Posterior vena cava (tissue), 2 donors: ENCODE measurements at regions of chr16 and their contacts with region 1.

Region 1: GRCh38 chr16:84754353-84754856 is 54.6 kb downstream of the USP10 start:
- DNase-seq: no peak

Region 2: GRCh38 chr16:84952335-84953189 is 198.2 kb after region 1 on chr16:
- intact Hi-C with region 1: loop called (anchors 5 kb)
- DNase-seq: peak; percentile 88

Region 3: GRCh38 chr16:84959045-84959576 is 204.7 kb after region 1 on chr16:
- intact Hi-C with region 1: loop called (anchors 5 kb)
- DNase-seq: no peak

Region 4: DNA sequence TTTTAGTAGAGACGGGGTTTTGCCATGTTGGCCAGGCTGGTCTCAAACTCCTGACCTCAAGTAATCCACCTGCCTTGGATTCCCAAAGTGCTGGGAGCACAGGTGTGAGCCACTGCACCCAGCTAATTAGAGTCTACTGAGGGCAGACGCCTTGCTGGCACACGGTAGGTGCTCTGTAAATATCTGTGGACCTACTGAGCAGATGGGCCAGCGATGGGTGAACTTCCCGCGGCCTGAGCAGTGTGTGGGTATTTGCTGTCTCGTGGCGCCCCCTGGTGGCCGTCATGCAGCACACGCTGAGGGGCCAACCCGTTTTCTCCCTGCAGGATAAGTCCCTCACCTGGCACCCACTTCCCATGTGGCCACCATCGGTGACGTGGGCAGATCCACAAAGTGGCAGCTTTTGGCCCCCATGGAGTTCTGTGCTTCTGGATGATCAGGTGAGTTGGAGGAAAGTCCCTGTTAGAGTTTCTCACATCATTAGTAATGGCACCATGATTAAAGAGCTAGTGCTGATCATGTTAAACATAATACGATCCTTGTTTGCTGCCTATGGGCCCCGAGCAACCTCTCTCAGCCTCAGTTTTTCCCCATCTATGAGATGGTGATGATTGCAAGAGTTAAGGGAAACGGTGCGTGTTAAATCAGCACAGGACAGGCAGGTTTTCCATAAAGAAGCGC is 216.2 kb after region 1 on chr16:
- intact Hi-C with region 1: loop called in 1 of 2 experiments (anchors 2 kb)
- DNase-seq: peak; percentile 93